ENCODE measurements at regions of chr2 and their contacts with region 1.

Region 1: DNA sequence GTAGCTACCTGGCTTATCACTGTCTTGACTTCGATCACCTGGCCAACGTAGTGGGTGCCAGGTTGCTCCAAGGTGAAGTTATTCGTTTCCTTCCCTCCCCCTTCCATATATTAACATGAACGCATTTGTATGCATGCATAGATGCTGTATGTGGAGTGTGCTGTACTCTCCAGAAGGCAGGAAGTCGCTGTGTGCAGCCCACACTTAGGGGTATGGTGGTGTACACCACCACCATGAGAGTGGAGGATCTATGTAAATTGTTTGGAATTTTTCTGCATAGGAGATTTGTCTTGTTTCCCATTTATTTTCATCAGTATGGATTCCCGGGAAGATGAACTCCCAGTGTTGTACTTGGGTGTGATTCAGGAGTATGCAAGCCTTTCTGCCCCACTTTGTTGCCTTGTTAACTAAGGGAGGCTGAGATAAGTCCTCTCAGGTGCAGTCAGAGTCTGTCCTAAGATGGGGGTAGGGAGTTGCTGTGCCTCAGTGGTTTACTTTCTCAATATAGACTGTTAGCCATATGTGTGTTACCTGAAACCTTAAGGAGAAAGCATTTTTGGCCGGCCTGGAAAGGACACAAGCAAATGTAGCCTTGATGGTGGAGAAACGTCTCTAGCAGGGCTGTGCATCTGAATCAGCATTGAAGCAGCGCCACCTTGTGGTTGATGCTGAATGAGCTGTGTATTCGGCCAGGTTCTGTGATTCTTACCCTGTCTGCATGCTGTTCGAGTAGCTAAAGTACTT is 149.8 kb downstream of the TANC1 start:
- DNase-seq: peak; percentile 62 to 97 (median 87)
- ATAC-seq: peak; percentile 96
- H3K4me3 ChIP-seq: no peak overlapping the region
- H3K4me1 ChIP-seq: peaks cover 3% of the 10 kb centered on the region
- CTCF ChIP-seq: peak; percentile 77

Region 2: DNA sequence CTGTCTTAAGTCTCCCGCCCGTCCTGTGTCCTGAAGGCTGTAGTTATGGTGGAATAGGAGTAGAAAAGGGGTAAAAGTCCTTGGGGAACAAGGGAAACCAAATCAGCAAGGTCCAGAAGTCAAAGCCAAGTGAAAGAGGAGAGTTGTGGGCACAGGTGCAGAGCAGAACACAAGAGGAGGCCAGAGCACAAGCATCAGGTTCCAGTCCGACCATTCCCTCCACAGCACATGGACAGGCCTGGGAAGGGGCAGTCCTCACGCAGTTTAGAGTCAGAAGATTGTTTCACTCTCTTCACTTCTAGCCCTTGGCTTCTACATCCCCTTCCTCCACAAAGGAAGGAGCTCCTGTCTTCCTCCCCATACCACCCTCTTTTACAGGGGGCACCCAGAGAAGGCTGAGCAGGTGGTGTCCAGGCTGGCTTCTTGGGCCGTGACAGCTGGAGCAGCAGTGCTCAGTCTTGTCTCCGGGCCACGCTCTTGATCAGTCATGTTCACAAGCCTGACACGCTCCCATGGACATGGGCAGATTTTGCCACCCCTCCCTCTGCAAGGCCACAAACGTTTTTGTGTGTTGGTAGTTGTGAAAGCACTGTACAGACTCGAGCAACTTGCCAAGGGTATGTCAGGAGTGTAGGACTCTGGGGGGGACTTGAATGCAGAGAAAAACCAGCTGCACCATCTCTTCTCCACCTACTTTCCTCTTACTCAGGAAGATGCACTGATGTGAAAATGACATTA is 461.6 kb before region 1 on chr2:
- intact Hi-C with region 1: no loop called
- DNase-seq: no peak
- ATAC-seq: no peak
- H3K4me3 ChIP-seq: no peak overlapping the region
- H3K4me1 ChIP-seq: no peaks in the 10 kb centered on the region
- CTCF ChIP-seq: no peak

Region 3: GRCh38 chr2:158903711-158904443 is 214.4 kb before region 1 on chr2:
- intact Hi-C with region 1: loop called (anchors 5 kb)
- DNase-seq: no peak
- ATAC-seq: no peak
- H3K4me3 ChIP-seq: no peak overlapping the region
- H3K4me1 ChIP-seq: no peaks in the 10 kb centered on the region
- CTCF ChIP-seq: no peak

Region 4: GRCh38 chr2:158998551-158999248 is 119.6 kb before region 1 on chr2:
- intact Hi-C with region 1: no loop called
- DNase-seq: no peak
- ATAC-seq: no peak
- H3K4me3 ChIP-seq: no peak overlapping the region
- H3K4me1 ChIP-seq: peaks cover 27% of the 10 kb centered on the region
- CTCF ChIP-seq: no peak

Region 5: GRCh38 chr2:159035790-159036411 is 82.4 kb before region 1 on chr2:
- intact Hi-C with region 1: loop called in 1 of 2 experiments (anchors 5 kb)
- DNase-seq: peak in 2 of 3 donors; percentile 53 to 86
- ATAC-seq: peak; percentile 99
- H3K4me3 ChIP-seq: no peak overlapping the region
- H3K4me1 ChIP-seq: peaks cover 6% of the 10 kb centered on the region
- CTCF ChIP-seq: peak; percentile 8